Dorsolateral prefrontal cortex (tissue), 120 donors: ENCODE measurements at regions of chr5 and their contacts with region 1.

Region 1: GRCh38 chr5:31119938-31120641 is 73.4 kb upstream of the CDH6 start:
- DNase-seq: no peak
- H3K4me3 ChIP-seq: no peak overlapping the region
- H3K27ac ChIP-seq: no peak overlapping the region
- H3K27me3 ChIP-seq: no peaks in the 10 kb centered on the region
- CTCF ChIP-seq: no peak

Region 2: GRCh38 chr5:31157720-31158119 is 37.6 kb after region 1 on chr5:
- intact Hi-C with region 1: loop called in 1 of 2 experiments (anchors 5 kb)
- DNase-seq: no peak
- H3K4me3 ChIP-seq: no peak overlapping the region
- H3K27ac ChIP-seq: no peak overlapping the region
- H3K27me3 ChIP-seq: peaks cover 0 to 3% (median 0%) of the 10 kb centered on the region in 45 donors
- CTCF ChIP-seq: no peak

Region 3: GRCh38 chr5:31605920-31606319 is 485.8 kb after region 1 on chr5:
- intact Hi-C with region 1: no loop called
- DNase-seq: peak in 4 of 10 donors; percentile 46 to 64 (median 56)
- H3K4me3 ChIP-seq: no peak overlapping the region
- H3K27ac ChIP-seq: no peak overlapping the region
- H3K27me3 ChIP-seq: no peaks in the 10 kb centered on the region
- CTCF ChIP-seq: peak in 12 of 56 donors; percentile 8 to 33 (median 28)